HepG2 (cell line): ENCODE measurements at regions of chr12 and their contacts with region 1.

Region 1: DNA sequence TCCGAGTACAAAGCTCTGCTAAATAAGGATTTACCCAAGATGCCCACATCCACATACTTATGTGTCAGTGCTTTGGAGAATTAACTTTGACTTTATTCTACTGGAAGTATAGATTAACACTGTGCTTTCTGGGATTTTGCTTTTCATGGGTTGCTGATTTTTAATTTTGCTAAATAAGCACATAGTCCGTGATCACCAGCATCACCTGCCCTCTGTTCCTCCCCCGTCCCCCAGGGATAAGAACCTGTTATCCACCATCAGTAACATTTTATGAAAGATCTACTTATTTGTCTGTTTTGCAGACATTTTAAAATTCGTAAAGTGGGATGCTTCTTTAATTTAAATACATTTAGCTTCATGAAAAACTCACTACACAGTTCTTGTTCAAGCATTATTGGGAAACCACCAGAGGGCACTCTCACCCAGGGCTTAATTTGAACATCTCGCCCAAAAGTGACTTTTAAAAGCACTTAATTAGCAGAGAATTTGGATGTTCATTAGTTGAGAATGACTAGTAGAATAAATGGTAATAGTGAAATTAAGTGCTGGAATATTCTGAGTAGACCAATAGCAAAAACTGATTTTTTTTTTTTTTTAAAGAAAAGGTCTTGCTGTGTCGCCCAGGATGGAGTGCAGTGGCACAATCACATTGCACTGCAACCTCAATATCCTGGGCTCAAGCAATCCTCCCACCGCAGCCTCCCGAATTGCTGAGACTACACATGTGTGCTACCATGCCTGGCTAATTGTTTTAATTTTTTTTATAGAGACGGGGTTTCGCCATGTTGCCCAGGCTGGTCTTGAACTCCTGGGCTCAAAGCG is 35.7 kb downstream of the MRPL42 start:
- DNase-seq: peak; percentile 33
- ATAC-seq: no peak
- H3K4me3 ChIP-seq: no peak overlapping the region
- H3K27ac ChIP-seq: no peak overlapping the region
- H3K4me1 ChIP-seq: no peaks in the 10 kb centered on the region
- H3K27me3 ChIP-seq: no peaks in the 10 kb centered on the region
- CTCF ChIP-seq: peak; percentile 59
- EP300 ChIP-seq: no peak
- POLR2A ChIP-seq: no peak
- RAD21 ChIP-seq: peak; percentile 42; the same call in 1 of the 2 replicates

Region 2: DNA sequence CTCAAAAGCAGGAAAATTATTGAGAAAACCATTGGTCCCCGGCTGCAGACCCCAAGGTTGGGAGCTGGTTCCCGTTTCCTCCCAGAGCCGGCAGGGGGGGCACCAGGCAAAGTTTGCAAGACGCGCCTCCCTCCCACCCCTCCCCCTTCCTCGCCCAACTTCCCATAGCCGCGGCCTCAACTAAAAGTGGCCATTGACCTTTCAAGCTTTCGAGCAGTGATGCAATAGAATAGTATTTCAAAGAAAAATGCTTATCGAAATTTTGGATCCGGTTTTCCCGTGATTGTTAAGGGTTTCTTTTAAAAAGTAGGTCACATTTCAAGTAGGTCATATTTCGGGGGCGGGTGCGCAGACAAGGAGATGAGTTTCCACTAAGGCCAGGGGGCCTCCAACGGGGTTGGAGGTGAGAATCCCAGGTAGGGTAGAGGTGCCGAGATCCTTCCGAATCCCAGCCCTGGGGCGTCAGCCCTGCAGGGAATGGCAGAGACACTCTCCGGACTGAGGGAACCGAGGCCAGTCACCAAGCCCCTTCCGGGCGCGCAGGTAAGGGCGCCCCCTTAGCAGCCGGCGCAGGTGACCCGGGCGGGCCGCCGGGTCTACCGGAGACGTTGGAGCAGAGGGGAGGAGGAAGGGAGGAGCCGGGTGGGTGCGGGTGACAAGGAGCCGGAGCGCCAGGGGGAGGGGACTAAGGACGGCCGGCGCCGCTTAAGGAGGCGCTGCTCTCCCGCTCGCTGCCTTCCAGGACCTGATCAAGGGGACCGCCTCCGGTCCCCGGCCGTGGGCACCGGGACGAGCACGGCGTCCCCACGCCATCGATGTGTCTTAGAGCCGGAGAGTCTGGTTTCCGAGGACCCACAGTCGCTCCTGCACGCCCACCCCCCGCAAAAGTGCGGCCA is 66.9 kb after region 1 on chr12:
- CTCF ChIA-PET with region 1: interaction called, 10 read pairs
- POLR2A ChIA-PET with region 1: no interaction called
- in situ Hi-C with region 1: loop called (anchors 10 kb)
- intact Hi-C with region 1: loop called (anchors 2 kb)
- DNase-seq: peak; percentile 80
- ATAC-seq: peak; percentile 62
- H3K4me3 ChIP-seq: peak overlapping the region; percentile 64 to 81 (median 71)
- H3K27ac ChIP-seq: no peak overlapping the region
- H3K4me1 ChIP-seq: peaks cover 24% of the 10 kb centered on the region
- H3K27me3 ChIP-seq: peaks cover 3 to 24% of the 10 kb centered on the region in 2 experiments; a peak in 4 of 5 replicates
- CTCF ChIP-seq: peak; percentile 77
- EP300 ChIP-seq: peak in 1 of 2 experiments; percentile 31; a peak in 2 of 4 replicates
- POLR2A ChIP-seq: no peak
- RAD21 ChIP-seq: peak; percentile 59

Region 3: DNA sequence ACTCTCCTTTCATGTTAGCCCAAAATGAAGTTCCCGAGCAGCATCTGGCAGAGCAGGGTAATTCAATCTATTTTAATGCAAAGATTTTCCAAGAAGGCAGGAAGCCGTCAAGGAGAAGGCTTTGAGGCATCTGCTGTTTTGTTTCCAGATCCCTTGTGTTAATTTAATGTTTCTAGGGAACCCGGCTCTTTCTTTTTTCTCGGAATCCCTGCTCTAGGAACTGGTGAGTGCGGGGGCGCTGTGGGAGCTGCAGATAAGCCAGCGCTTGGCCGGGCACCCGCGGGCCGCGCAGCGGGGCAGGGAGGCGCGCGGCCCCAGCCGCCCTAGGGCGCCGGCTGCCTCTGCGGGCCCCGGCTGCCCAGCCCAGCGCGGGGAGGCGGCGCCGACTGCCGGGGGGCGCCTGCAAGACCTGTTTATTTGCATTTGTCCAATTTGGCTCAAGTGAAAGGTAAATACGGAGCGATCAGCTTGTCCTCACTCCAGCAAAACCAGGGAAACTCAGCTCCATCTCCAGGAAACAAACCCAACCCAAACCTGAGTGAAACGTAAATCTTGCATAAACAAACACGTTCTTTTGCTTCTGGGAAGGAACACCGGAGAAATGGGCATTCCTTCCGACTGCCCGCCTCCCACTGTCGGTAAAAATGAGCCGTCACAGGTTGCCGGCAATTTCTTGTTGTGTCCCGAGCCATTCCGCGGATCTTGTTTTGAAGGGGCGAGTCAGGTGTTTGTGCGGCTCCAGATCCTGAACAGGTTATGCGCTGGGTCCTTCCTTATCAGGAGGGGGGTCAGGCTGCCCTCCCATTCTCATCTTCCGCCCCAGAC is 239.3 kb after region 1 on chr12:
- CTCF ChIA-PET with region 1: interaction called, 4 read pairs
- POLR2A ChIA-PET with region 1: no interaction called
- in situ Hi-C with region 1: no loop called
- intact Hi-C with region 1: loop called (anchors 2 kb)
- DNase-seq: peak; percentile 55
- ATAC-seq: peak; percentile 100
- H3K4me3 ChIP-seq: peak overlapping the region; percentile 59 to 84 (median 77)
- H3K27ac ChIP-seq: peak overlapping the region; percentile 63
- H3K4me1 ChIP-seq: peaks cover 30% of the 10 kb centered on the region
- H3K27me3 ChIP-seq: no peaks in the 10 kb centered on the region
- CTCF ChIP-seq: peak; percentile 60
- EP300 ChIP-seq: peak; percentile 28 to 29; a peak in 1 of 4 replicates
- POLR2A ChIP-seq: no peak
- RAD21 ChIP-seq: peak; percentile 91

Region 4: DNA sequence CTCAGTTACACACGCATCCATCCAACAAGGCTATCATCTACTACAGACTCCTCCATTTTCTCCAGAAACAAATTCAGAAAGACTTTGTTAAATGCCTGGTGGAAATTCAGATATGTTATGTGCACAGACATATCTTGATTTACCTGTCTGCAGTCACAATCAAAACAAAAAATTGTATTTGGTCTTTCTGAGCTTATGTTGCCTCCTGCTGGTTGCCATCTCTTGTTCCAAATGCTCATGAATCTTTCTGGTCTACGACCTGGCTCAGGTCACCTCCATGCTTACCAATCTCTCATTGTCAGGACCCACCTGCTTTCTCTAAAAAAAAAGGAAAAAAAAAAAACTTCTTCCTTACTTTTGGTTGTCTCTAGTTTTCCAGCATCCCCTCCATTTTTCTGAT is 476.2 kb after region 1 on chr12:
- CTCF ChIA-PET with region 1: no interaction called
- POLR2A ChIA-PET with region 1: no interaction called
- in situ Hi-C with region 1: no loop called
- intact Hi-C with region 1: loop called (anchors 2 kb)
- DNase-seq: no peak
- ATAC-seq: no peak
- H3K4me3 ChIP-seq: no peak overlapping the region
- H3K27ac ChIP-seq: no peak overlapping the region
- H3K4me1 ChIP-seq: no peaks in the 10 kb centered on the region
- H3K27me3 ChIP-seq: peaks cover 0 to 7% of the 10 kb centered on the region in 2 experiments; a peak in 2 of 5 replicates
- CTCF ChIP-seq: peak; percentile 60
- EP300 ChIP-seq: no peak
- POLR2A ChIP-seq: no peak
- RAD21 ChIP-seq: peak; percentile 39; the same call in 1 of the 2 replicates